Posterior cingulate gyrus (tissue), 11 donors: ENCODE measurements at regions of chr2 and their contacts with region 1.

Region 1: DNA sequence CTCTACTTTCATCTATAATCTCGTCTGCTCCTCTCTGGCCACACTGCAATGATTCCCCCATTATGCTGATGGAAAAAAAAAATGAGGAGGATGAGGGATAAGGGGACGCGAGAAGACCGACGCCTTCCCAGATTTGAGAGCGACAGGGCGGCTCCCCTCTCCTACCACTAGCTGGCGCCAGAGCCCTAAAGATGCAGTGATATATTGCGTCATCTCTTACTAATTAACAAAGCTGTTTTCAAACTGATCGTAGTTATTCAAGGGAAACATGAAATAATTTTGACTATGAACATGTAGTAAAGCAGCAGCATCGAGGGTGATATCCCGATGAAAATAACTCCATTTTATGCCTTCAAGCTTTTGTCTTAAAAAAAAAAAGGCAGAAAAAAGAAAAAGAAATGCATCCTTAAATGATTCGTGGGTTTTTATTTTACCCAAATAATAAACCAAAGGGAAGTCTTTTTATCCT is 48.0 kb upstream of the HNRNPA3 start:
- DNase-seq: peak; percentile 80 to 98 (median 88)

Region 2: GRCh38 chr2:177212106-177212890 is 47.7 kb after region 1 on chr2 and contains the start of gene HNRNPA3:
- intact Hi-C with region 1: loop called (anchors 2 kb)
- DNase-seq: peak; percentile 99 to 100 (median 99)

Region 3: GRCh38 chr2:177322801-177323261 is 158.2 kb after region 1 on chr2:
- intact Hi-C with region 1: no loop called
- DNase-seq: no peak

Region 4: GRCh38 chr2:177622521-177622920 is 457.9 kb after region 1 on chr2:
- intact Hi-C with region 1: loop called (anchors 10 kb)
- DNase-seq: peak in 2 of 10 donors; percentile 29 to 46